ENCODE measurements at regions of chr1 and their contacts with region 1.

Region 1: GRCh38 chr1:37486680-37487618 is 12.6 kb downstream of the ZC3H12A start:
- DNase-seq: peak; percentile 94
- H3K4me3 Mint-ChIP-seq: no peak overlapping the region
- H3K27ac Mint-ChIP-seq: peak overlapping the region; percentile 74
- H3K4me1 Mint-ChIP-seq: peaks cover 15% of the 10 kb centered on the region
- H3K27me3 Mint-ChIP-seq: no peaks in the 10 kb centered on the region

Region 2: DNA sequence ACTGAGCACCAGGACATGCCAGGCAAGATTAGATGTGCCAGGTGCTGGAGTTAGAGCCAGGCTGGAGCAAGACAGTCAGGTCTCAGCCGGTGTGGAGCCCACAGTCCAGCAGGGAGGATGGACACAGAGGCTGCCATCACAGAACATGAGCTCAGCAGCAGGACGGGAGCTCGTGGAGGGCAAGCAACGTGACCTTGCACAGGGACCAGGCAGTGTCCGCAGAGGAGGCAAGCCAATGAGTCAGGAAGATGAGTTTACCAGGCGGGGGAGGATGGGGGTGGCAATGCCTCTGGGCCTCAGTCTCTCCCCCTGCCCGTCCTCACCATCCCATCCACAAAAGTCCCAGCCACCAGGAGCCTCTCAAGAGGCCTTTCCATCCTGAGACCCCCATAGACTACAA is 33.3 kb before region 1 on chr1:
- intact Hi-C with region 1: loop called (anchors 1 kb)
- DNase-seq: no peak
- H3K4me3 Mint-ChIP-seq: no peak overlapping the region
- H3K27ac Mint-ChIP-seq: no peak overlapping the region
- H3K4me1 Mint-ChIP-seq: peaks cover 13% of the 10 kb centered on the region
- H3K27me3 Mint-ChIP-seq: no peaks in the 10 kb centered on the region

Region 3: DNA sequence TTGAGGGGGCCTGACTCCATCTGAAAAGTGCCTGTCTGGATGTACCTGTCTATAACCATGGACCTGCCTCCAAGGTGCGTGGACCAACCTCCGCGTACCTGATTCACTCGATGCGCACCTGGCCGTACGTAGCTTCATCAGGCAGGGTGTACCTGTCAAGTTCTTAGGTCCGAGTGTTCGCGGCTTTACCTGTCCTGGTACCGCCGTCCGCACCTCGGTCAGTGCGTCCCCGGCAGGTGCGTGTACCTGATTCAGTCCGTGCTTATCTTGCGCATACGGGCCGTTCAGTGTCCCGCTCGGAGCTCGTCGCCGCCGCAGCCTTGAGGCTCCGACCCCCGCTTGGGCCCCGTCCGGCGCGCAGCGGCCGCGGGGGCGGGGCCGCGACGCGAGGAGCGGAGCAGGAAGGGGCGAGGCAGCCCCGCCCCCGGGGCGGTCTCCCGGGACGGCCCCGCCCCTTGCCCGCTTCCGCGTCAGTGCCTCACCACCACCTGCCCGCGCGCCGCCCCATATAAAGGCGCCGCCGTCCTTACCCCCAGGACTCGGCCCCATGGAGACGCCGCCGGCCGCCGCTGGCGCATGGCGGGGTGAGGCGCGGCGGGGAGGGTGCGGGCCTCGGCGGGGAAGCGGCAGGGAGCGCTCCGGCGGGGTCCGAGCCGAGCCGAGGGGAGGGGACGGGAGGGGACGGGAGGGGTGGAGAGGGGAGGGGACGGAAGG is 12.7 kb before region 1 on chr1 and contains the start of gene ZC3H12A:
- intact Hi-C with region 1: loop called (anchors 1 kb)
- DNase-seq: peak; percentile 98
- H3K4me3 Mint-ChIP-seq: peak within 1 kb of the TSS; percentile 97
- H3K27ac Mint-ChIP-seq: peak within 1 kb of the TSS; percentile 98
- H3K4me1 Mint-ChIP-seq: peaks cover 41% of the 10 kb centered on the region
- H3K27me3 Mint-ChIP-seq: no peaks in the 10 kb centered on the region
- total RNA-seq, gene ZC3H12A: 39.3 and 40.4 TPM in 2 replicates

Measured in activated CD4-positive, alpha-beta T cell treated with anti-CD3 and anti-CD28 coated beads, Interleukin-2, amount 10 ng/mL, durations not matched to agents 24 days and 14 days (primary cell).